Activated CD4-positive, alpha-beta memory T cell treated with anti-CD3 and anti-CD28 coated beads, Interleukin-2, amount 10 ng/mL, durations not matched to agents 7 days and 5 days (primary cell): ENCODE measurements at regions of chr6 and their contacts with region 1.

Region 1: GRCh38 chr6:43629505-43630300 is 639 bp upstream of the GTPBP2 start:
- DNase-seq: peak; percentile 95
- H3K4me3 Mint-ChIP-seq: peak overlapping the region; percentile 99
- H3K27ac Mint-ChIP-seq: peak overlapping the region; percentile 100
- H3K4me1 Mint-ChIP-seq: peaks cover 48% of the 10 kb centered on the region
- H3K27me3 Mint-ChIP-seq: no peaks in the 10 kb centered on the region

Region 2: GRCh38 chr6:41996997-41997396 is 1632.7 kb before region 1 on chr6:
- CTCF ChIA-PET with region 1: no interaction called
- POLR2A ChIA-PET with region 1: no interaction called
- DNase-seq: no peak
- H3K4me3 Mint-ChIP-seq: no peak overlapping the region
- H3K27ac Mint-ChIP-seq: no peak overlapping the region
- H3K4me1 Mint-ChIP-seq: peaks cover 9% of the 10 kb centered on the region
- H3K27me3 Mint-ChIP-seq: no peaks in the 10 kb centered on the region

Region 3: GRCh38 chr6:43570876-43571441 is 58.7 kb before region 1 on chr6:
- CTCF ChIA-PET with region 1: interaction called, 3 read pairs
- POLR2A ChIA-PET with region 1: interaction called, 13 read pairs
- DNase-seq: no peak
- H3K4me3 Mint-ChIP-seq: peak overlapping the region; percentile 2
- H3K27ac Mint-ChIP-seq: peak overlapping the region; percentile 87
- H3K4me1 Mint-ChIP-seq: peaks cover 44% of the 10 kb centered on the region
- H3K27me3 Mint-ChIP-seq: no peaks in the 10 kb centered on the region

Region 4: DNA sequence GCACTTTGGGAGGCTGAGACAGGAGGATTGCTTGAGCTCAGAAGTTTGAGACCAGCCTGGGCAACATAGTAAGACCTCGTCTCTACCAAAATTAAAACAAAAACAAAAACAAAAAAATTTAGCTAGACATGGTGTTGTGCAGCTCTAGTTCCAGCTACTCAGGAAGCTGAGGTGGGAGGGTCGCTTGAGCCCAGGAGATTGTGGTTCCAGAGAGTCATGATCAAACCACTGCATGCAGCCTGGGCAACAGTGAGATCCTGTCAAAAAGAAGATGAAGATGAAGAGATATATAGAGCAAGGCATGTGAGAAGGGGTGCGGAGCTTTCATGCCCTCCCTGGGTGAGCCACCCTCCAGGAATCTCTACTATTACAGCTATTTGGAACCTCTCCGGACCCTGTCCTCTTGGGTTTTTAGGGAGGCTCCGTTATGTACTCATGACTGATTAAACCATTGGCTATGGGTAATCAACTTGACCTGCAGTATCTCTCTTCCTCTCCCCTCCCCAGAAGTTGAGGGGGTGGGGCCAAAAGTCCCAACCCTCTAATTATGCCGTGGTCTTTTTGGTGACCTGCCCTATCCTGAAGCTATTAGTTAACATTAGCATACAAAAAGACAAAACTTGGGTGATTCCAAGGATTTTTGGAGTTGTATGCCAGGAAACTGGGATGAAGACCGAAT is 44.7 kb before region 1 on chr6:
- CTCF ChIA-PET with region 1: interaction called, 3 read pairs
- POLR2A ChIA-PET with region 1: interaction called, 12 read pairs
- DNase-seq: peak; percentile 80
- H3K4me3 Mint-ChIP-seq: peak overlapping the region; percentile 25
- H3K27ac Mint-ChIP-seq: peak overlapping the region; percentile 94
- H3K4me1 Mint-ChIP-seq: peaks cover 50% of the 10 kb centered on the region
- H3K27me3 Mint-ChIP-seq: no peaks in the 10 kb centered on the region

Region 5: GRCh38 chr6:43644931-43645612 is 15.4 kb after region 1 on chr6 and contains the start of gene RSPH9:
- CTCF ChIA-PET with region 1: interaction called, 3 read pairs
- POLR2A ChIA-PET with region 1: interaction called, 12 read pairs
- DNase-seq: peak; percentile 73
- H3K4me3 Mint-ChIP-seq: peak within 1 kb of the TSS; percentile 67
- H3K27ac Mint-ChIP-seq: no peak within 1 kb of the TSS
- H3K4me1 Mint-ChIP-seq: peaks cover 17% of the 10 kb centered on the region
- H3K27me3 Mint-ChIP-seq: peaks cover 2% of the 10 kb centered on the region
- total RNA-seq, gene RSPH9: not detected